HEK293 (cell line): ENCODE measurements at regions of chr12 and their contacts with region 1.

Region 1: DNA sequence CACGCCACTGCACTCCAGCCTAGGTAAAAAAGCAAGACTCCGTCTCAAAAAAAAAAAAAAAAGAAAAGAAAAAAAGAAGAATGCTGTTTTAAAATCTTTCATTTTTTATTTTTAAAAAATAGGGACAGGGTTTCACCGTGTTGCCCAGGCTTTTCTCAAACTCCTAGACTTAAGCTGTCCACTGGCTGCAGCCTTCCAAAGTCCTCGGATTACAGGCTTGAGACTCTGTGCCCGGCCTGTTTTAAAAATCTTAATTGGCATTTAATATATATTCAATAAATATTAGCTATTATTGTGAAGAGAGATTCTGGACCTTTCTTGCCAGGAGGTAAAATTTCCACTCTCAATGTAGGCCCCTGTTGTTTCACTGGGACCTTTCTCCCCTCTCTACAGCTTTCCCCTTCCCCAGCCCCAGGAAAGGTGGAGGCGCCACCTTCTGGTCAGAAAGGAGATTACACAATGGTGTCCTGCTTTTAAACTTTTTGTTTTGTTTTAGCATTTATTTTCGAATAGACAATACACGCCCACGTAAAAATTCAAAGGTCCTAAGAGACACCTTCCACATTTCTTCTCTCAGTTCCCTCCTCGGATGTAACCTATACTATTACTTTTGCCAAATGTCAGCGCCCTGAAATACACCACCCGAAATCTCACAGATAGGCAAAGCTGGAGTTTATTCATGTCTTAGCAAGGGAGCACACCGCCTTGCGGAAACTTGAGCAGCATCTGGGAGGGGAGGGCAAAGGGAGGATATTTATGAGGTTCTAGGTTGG is 23.8 kb upstream of the PHC1 start:
- H3K4me3 ChIP-seq: peak overlapping the region; percentile 39
- H3K27ac ChIP-seq: no peak overlapping the region
- H3K4me1 ChIP-seq: no peaks in the 10 kb centered on the region
- CTCF ChIP-seq: peak; percentile 52; the same call in 1 of the 2 replicates

Region 2: DNA sequence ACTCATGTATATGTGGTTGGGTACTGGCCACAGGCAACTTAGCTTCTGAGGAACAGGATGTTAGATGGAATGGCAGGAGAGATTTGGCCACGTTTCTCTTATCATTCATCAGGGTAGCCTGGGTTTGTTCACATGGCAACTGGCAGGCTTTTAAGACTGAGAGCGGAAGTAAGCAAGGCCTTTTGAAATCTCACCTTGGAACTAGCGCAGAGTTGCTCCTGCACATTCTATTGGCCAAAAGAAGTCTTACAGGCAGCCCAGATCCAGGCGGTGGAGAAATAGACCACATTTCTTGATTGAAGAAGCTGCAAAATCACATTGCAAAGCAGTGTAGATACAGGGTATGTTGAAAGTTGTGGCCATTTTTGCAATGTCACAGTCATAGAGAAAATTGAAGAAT is 763.4 kb before region 1 on chr12:
- CTCF ChIA-PET with region 1: no interaction called
- POLR2A ChIA-PET with region 1: no interaction called
- H3K4me3 ChIP-seq: no peak overlapping the region
- H3K27ac ChIP-seq: no peak overlapping the region
- H3K4me1 ChIP-seq: no peaks in the 10 kb centered on the region
- CTCF ChIP-seq: no peak

Region 3: DNA sequence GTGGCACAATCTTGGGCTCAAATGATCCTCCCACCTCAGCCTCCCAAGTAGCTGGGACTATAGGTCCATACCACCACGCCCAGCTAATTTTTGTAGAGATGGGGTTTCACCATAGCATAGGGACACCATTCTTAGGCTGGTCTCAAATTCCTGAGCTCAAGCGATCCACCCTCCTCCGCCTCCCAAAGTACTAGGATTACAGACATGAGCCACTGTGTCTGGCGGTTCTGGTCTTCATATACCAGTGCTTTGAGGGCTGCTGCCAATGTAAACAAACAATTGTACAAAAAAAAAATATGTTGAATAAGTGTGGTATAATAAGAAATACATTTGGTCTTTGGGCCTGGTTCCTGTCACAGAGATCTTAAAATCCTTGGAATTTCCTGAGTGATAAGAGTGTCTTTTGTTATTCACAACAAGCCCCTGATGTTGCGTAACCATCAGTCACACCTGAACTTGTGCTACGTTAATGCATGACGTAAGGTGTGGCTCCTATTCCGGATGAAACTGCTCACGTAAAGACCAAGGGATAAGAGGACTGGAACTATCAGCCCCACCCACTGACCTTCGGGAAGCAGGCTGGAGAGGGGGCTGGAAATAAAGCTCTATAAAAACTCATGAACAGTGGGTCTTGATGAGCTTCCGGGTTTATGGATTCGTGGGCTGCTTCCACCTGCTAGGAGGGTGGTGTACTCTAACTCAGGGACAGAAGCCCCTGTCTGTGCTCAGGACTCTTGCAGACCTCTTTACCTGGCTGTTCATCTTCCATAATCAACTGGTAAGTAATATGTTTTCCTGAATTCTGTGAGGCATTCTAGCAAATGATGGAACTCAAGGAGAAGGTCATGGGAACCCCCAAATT is 209.2 kb before region 1 on chr12:
- CTCF ChIA-PET with region 1: interaction called, 32 read pairs
- POLR2A ChIA-PET with region 1: no interaction called
- H3K4me3 ChIP-seq: peak overlapping the region; percentile 20
- H3K27ac ChIP-seq: no peak overlapping the region
- H3K4me1 ChIP-seq: no peaks in the 10 kb centered on the region
- CTCF ChIP-seq: no peak

Region 4: GRCh38 chr12:8860165-8860961 is 30.1 kb before region 1 on chr12:
- CTCF ChIA-PET with region 1: interaction called, 16 read pairs
- POLR2A ChIA-PET with region 1: no interaction called
- H3K4me3 ChIP-seq: no peak overlapping the region
- H3K27ac ChIP-seq: no peak overlapping the region
- H3K4me1 ChIP-seq: peaks cover 3% of the 10 kb centered on the region; the same call in 1 of the 2 replicates
- CTCF ChIP-seq: peak; percentile 51; the same call in 1 of the 2 replicates

Region 5: GRCh38 chr12:8914716-8915526 is 24.4 kb after region 1 on chr12:
- CTCF ChIA-PET with region 1: interaction called, 21 read pairs
- POLR2A ChIA-PET with region 1: no interaction called
- H3K4me3 ChIP-seq: peak overlapping the region; percentile 68
- H3K27ac ChIP-seq: peak overlapping the region; percentile 68; the same call in 1 of the 2 replicates
- H3K4me1 ChIP-seq: peaks cover 13% of the 10 kb centered on the region
- CTCF ChIP-seq: no peak

Region 6: DNA sequence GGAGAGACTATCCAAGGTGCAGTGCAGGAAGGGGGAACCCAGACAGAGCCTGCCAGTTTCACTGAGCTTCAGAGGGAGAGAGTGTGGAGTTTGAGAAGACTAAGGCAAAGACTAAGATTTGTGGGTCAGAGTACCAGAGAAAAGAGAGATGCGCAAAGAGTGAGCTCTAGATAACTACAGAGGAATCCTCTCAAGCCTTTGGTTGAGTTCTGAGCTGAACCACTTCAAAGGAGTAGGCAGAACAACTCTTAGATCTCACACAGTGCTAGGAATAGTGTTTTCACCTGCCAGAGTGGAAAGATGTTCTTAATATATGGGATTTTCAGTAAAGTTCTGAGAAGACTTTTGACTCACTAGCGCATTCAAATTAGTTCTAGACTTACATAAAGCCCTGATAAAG is 69.7 kb after region 1 on chr12:
- CTCF ChIA-PET with region 1: no interaction called
- POLR2A ChIA-PET with region 1: no interaction called
- H3K4me3 ChIP-seq: no peak overlapping the region
- H3K27ac ChIP-seq: no peak overlapping the region
- H3K4me1 ChIP-seq: no peaks in the 10 kb centered on the region
- CTCF ChIP-seq: no peak